ENCODE measurements at regions of chr17 and their contacts with region 1.

Region 1: GRCh38 chr17:44775136-44775837 is 16.5 kb downstream of the ADAM11 start:
- DNase-seq: no peak
- ATAC-seq: peak; percentile 97
- H3K4me3 Mint-ChIP-seq: peak overlapping the region; percentile 77
- H3K27ac Mint-ChIP-seq: no peak overlapping the region
- H3K4me1 Mint-ChIP-seq: peaks cover 7% of the 10 kb centered on the region
- H3K27me3 Mint-ChIP-seq: no peaks in the 10 kb centered on the region

Region 2: GRCh38 chr17:44556832-44557606 is 218.3 kb before region 1 on chr17 and contains the start of gene FZD2:
- CTCF ChIA-PET with region 1: no interaction called
- POLR2A ChIA-PET with region 1: no interaction called
- intact Hi-C with region 1: loop called in 1 of 2 experiments (anchors 10 kb)
- DNase-seq: peak; percentile 61
- ATAC-seq: peak; percentile 74
- H3K4me3 Mint-ChIP-seq: peak within 1 kb of the TSS; percentile 73
- H3K27ac Mint-ChIP-seq: no peak within 1 kb of the TSS
- H3K4me1 Mint-ChIP-seq: peaks cover 18% of the 10 kb centered on the region
- H3K27me3 Mint-ChIP-seq: peaks cover 63% of the 10 kb centered on the region
- total RNA-seq, gene FZD2: 0.07 to 0.09 TPM

Region 3: GRCh38 chr17:44812263-44812662 is 37.0 kb after region 1 on chr17:
- CTCF ChIA-PET with region 1: interaction called, 10 read pairs
- POLR2A ChIA-PET with region 1: interaction called, 4 read pairs
- intact Hi-C with region 1: no loop called
- DNase-seq: no peak
- ATAC-seq: no peak
- H3K4me3 Mint-ChIP-seq: no peak overlapping the region
- H3K27ac Mint-ChIP-seq: no peak overlapping the region
- H3K4me1 Mint-ChIP-seq: no peaks in the 10 kb centered on the region
- H3K27me3 Mint-ChIP-seq: no peaks in the 10 kb centered on the region

Region 4: DNA sequence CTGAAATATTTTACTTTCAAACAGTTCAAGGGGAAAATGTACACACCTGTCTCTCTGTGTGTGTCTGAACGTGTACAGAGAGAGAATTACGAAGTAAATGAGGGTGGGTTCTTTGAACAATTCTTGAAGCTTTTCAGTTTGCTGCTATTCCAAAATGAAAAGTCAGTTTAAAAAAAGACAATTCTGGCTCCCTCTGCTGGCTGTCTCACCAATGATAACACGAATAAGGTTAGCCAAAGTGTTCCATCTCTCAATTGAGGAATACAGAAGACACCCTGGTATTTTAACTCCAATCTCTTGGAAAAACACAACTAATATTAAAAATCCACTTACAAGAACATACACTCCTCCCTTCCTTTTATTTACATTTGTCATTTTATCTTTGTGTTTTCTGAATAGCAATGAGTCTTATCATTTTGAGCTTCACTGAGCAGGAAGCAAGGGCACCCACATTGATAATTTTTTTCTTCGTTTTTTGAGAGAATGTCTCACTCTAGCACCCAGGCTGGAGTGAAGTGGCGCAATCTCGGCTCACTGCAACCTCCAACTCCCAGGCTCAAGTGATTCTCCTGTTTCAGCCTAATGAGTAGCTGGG is 103.4 kb after region 1 on chr17:
- CTCF ChIA-PET with region 1: interaction called, 36 read pairs
- POLR2A ChIA-PET with region 1: no interaction called
- intact Hi-C with region 1: loop called in 1 of 2 experiments (anchors 1 kb)
- DNase-seq: peak; percentile 47
- ATAC-seq: no peak
- H3K4me3 Mint-ChIP-seq: no peak overlapping the region
- H3K27ac Mint-ChIP-seq: no peak overlapping the region
- H3K4me1 Mint-ChIP-seq: no peaks in the 10 kb centered on the region
- H3K27me3 Mint-ChIP-seq: no peaks in the 10 kb centered on the region

Region 5: DNA sequence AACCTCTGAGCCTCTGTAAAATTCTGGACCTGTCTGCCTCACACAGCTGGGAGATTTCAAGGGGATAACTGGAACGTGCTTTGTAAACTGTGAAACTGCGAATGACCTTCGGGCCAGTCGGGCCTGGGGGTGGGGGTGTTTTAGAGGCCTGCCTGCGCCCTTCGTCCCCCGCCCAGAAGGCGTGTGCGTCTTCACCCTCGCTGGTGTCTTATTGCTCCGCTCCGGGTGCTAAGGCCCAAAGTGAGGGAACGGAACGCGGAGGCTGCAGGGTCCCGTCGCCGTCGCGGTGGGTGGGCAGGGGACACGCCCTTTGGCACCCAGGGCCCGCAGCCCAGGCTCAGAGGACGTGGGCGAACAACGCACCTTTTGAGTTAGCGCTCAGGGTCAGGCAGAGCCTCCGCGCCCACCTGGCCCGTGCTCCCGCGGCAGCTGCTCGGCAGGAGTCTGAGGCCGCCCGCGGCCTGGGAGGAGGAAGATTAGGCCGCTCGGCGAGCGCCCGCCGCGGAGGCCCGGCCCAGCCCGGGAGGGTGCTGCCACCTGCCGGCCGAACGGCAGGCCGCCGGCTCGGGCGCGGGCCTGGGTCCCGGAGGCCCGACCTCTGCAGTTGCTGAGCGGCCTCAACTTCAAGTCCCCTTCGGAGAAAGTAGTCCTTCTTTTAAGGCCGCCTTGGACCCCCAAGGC is 246.5 kb after region 1 on chr17:
- CTCF ChIA-PET with region 1: interaction called, 15 read pairs
- POLR2A ChIA-PET with region 1: no interaction called
- intact Hi-C with region 1: loop called (anchors 1 kb)
- DNase-seq: peak; percentile 83
- ATAC-seq: peak; percentile 73
- H3K4me3 Mint-ChIP-seq: no peak overlapping the region
- H3K27ac Mint-ChIP-seq: no peak overlapping the region
- H3K4me1 Mint-ChIP-seq: peaks cover 24% of the 10 kb centered on the region
- H3K27me3 Mint-ChIP-seq: peaks cover 31% of the 10 kb centered on the region

Region 6: DNA sequence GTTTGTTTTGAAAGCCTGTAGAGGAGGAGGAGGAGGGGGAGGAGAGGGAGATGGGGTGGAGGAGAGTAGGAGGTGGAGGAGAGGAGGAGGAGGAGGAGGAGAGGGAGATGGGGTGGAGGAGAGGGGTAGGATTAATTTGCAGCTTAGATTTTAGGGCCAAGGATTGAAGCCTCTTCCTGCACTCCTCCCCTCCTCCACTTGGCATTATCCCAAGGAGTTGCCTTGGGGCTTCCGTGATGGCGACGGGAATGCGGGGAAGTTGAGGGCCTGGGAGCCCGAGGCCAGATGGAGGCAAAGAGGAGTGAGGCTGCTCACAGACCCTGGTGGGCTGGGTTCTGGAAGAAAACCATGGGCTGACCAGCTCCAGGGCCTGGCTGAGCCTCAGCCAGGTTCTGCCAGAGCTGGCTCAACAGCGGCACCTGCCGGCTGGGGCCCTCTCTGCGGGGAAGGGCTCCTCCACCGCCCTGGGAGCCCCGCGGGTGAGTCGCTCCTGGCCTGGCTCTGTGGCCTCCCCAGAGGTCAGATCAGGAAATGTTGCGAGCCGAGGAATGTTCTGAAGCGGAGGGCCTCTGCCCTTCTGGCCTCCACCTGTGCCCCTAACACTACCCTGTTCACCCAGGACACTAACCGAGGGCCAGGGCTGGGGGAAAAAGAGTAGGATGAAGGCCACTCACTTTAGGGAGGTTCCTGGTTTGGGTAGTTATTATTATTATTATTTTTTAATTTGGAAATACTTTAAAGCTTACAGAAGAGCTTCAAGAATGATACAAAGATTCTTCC is 422.5 kb after region 1 on chr17:
- CTCF ChIA-PET with region 1: no interaction called
- POLR2A ChIA-PET with region 1: no interaction called
- intact Hi-C with region 1: loop called in 1 of 2 experiments (anchors 10 kb)
- DNase-seq: peak; percentile 95
- ATAC-seq: peak; percentile 100
- H3K4me3 Mint-ChIP-seq: no peak overlapping the region
- H3K27ac Mint-ChIP-seq: no peak overlapping the region
- H3K4me1 Mint-ChIP-seq: peaks cover 2% of the 10 kb centered on the region
- H3K27me3 Mint-ChIP-seq: no peaks in the 10 kb centered on the region